Astrocyte of the cerebellum (primary cell): ENCODE measurements at regions of chr14 and their contacts with region 1.

Region 1: DNA sequence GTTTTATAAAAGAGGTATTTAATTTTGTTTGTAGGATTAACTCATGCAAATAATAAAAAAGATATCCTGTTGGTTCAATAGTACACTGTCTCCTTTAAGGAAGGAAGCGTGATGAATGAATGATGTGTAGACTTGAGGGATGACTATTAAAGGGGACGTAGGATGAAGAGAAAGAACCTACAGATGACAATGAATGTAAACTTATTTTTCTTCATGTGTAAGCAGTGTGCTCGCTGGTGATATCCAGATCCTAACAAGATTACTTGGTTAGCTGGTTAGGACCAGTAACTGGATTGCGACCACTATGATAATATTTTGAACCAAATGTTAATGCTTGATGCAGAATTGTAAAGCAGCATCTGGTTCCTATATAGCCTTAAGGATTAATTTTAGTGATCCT is 2.6 kb downstream of the ARF6 start:
- DNase-seq: no peak
- H3K4me3 ChIP-seq: peak overlapping the region; percentile 85
- CTCF ChIP-seq: no peak

Region 2: GRCh38 chr14:49019467-49020115 is 875.9 kb before region 1 on chr14:
- in situ Hi-C with region 1: no loop called
- DNase-seq: no peak
- H3K4me3 ChIP-seq: no peak overlapping the region
- CTCF ChIP-seq: no peak

Region 3: GRCh38 chr14:49959822-49960408 is 64.4 kb after region 1 on chr14:
- in situ Hi-C with region 1: no loop called
- DNase-seq: no peak
- H3K4me3 ChIP-seq: no peak overlapping the region
- CTCF ChIP-seq: no peak

Region 4: GRCh38 chr14:49977126-49977841 is 81.8 kb after region 1 on chr14:
- in situ Hi-C with region 1: loop called (anchors 5 kb)
- DNase-seq: no peak
- H3K4me3 ChIP-seq: no peak overlapping the region
- CTCF ChIP-seq: no peak